CD4-positive, alpha-beta T cell (primary cell): ENCODE measurements at regions of chr20 and their contacts with region 1.

Region 1: DNA sequence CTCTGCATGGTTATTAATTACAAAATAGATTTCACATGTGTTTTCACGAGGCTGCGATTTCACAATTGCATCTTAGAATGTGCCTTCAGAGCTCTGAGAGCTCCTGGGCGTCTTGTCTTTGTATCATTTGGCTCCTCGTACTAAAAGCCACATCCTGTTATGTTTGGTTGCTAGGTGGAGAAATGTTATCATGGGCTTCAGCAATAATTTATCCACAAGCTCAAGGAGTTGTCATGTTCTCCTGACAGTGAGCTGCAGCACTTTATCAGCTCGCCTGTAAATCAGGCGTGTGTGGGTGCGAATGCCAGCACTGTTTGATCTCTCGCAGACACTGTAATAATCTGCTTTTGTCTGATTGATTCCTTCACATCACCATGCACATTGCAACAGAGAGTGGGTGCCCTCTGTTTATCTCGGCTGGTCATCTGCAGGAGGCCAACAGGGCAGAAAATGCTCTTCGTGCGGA is 218.6 kb upstream of the ZFP64 start:
- DNase-seq: peak; percentile 46 to 94 (median 62)
- ATAC-seq: peak; percentile 86
- H3K4me3 ChIP-seq: peak overlapping the region; percentile 25
- H3K4me3 Mint-ChIP-seq: peak overlapping the region; percentile 81
- H3K27ac ChIP-seq: peak overlapping the region; percentile 89 to 96
- H3K27ac Mint-ChIP-seq: peak overlapping the region; percentile 96
- H3K4me1 ChIP-seq: peaks cover 61% of the 10 kb centered on the region
- H3K4me1 Mint-ChIP-seq: peaks cover 84% of the 10 kb centered on the region
- H3K27me3 ChIP-seq: no peaks in the 10 kb centered on the region
- H3K27me3 Mint-ChIP-seq: no peaks in the 10 kb centered on the region
- CTCF ChIP-seq: no peak

Region 2: DNA sequence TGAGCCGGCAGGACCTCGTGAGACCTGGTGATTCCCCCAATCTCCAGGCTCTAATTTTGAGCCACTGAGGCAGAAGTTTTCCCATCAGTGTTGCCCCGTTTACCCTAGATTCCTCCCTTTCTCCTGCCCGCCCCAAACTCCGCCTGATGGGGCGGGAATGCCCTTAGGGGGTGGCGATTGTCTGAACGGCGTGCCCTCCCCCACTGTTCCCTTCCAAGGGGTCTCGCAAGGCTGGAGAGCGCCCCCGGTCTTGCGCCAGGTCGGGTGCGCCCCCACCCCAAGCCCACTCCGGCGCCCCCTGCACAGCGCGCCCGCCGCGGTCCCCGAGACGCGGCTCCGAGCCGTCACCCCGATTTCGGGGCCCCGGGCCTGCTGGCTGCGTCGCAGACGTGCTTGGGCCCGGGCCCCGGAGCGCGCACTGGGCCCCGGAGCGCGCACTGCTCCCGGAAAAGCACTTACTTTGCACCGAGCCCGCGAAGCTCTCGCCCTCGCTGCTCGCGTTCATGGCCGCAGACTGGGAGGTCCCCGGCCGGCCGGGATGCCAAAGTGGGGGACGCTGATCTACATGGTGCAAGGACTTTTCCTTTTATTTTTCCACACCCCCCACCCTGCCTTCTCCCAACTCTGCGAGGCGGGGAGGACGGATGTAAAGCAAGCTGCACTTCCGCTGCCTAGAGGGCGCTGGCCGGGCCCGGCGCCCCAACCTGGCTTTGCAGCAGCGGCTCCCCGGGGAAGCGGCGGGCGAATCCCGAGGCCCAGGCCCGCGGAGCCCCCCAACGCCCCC is 218.9 kb before region 1 on chr20 and contains the start of gene ZFP64:
- CTCF ChIA-PET with region 1: no interaction called
- POLR2A ChIA-PET with region 1: interaction called, 7 read pairs
- intact Hi-C with region 1: loop called in 1 of 2 experiments (anchors 5 kb)
- DNase-seq: peak; percentile 40 to 87 (median 66)
- ATAC-seq: peak; percentile 78
- H3K4me3 ChIP-seq: peak within 1 kb of the TSS; percentile 97
- H3K4me3 Mint-ChIP-seq: peak within 1 kb of the TSS; percentile 97
- H3K27ac ChIP-seq: peak within 1 kb of the TSS; percentile 74 to 80
- H3K27ac Mint-ChIP-seq: peak within 1 kb of the TSS; percentile 94
- H3K4me1 ChIP-seq: peaks cover 18% of the 10 kb centered on the region
- H3K4me1 Mint-ChIP-seq: peaks cover 18% of the 10 kb centered on the region
- H3K27me3 ChIP-seq: no peaks in the 10 kb centered on the region
- H3K27me3 Mint-ChIP-seq: no peaks in the 10 kb centered on the region
- CTCF ChIP-seq: peak; percentile 73
- total RNA-seq, gene ZFP64: 2.5 to 3.2 TPM

Region 3: DNA sequence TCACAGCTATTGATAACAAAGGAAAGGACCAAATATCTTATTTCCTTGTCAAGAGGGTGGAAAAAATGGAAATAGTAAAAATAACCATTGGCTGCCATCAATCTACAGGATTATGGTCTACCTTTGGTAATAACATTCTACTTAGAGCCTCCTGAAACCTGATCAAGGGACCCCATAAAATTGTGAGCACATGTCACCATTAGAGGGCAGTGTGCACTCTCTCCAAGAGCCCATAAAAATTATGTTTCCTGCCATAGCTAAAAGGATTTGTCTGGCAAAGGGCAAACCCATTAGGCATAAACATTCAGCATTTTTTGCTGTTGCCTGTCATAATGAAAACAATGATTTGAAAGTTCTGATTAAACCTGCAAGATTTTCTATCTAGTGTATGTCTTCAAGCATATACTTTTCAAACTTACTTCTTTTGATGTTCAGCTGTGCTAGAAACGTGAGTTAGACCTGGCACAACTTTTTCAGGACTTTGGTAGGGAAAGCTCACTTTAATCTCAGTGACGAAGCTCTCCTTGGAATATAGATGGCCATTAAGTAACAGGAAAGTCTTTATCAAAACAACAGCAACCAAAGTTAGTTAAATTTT is 98.0 kb before region 1 on chr20:
- CTCF ChIA-PET with region 1: interaction called, 5 read pairs
- POLR2A ChIA-PET with region 1: interaction called, 17 read pairs
- intact Hi-C with region 1: no loop called
- DNase-seq: peak in 13 of 14 experiments; percentile 20 to 83 (median 47)
- ATAC-seq: peak; percentile 73
- H3K4me3 ChIP-seq: no peak overlapping the region
- H3K4me3 Mint-ChIP-seq: no peak overlapping the region
- H3K27ac ChIP-seq: no peak overlapping the region
- H3K27ac Mint-ChIP-seq: no peak overlapping the region
- H3K4me1 ChIP-seq: peaks cover 4% of the 10 kb centered on the region
- H3K4me1 Mint-ChIP-seq: peaks cover 38% of the 10 kb centered on the region
- H3K27me3 ChIP-seq: no peaks in the 10 kb centered on the region
- H3K27me3 Mint-ChIP-seq: no peaks in the 10 kb centered on the region
- CTCF ChIP-seq: peak; percentile 88

Region 4: DNA sequence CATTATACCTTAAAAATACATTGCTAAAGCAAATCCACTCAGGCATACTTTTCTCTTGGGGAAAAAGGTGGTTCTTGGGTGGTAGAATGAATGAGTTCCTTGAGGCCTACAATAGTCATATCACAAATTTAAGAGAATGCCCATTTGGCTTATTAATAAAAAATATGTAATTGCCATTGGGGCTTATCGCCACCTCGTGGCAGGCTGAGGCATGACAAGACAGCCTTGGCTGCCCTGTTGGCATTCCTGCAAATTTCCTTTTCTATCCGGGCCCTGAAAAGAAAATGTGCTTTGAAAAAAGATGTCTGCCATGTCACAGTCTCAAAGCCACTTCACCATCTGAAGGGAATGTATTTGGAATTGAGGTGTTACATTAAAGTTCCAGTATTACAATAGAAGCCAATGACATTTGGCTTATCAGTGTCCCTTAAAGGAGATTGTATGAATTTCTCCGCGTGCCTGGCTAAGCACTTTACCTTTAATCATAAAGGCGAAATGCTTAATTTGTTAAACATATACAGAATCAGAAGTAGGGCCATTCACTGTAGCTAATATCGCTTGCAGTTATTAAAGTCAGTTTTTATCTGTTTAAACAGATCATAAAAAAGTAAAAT is 30.4 kb before region 1 on chr20:
- CTCF ChIA-PET with region 1: no interaction called
- POLR2A ChIA-PET with region 1: interaction called, 39 read pairs
- intact Hi-C with region 1: no loop called
- DNase-seq: peak in 12 of 14 experiments; percentile 9 to 60 (median 26)
- ATAC-seq: no peak
- H3K4me3 ChIP-seq: no peak overlapping the region
- H3K4me3 Mint-ChIP-seq: no peak overlapping the region
- H3K27ac ChIP-seq: no peak overlapping the region
- H3K27ac Mint-ChIP-seq: no peak overlapping the region
- H3K4me1 ChIP-seq: peaks cover 4% of the 10 kb centered on the region
- H3K4me1 Mint-ChIP-seq: peaks cover 26% of the 10 kb centered on the region
- H3K27me3 ChIP-seq: no peaks in the 10 kb centered on the region
- H3K27me3 Mint-ChIP-seq: no peaks in the 10 kb centered on the region
- CTCF ChIP-seq: peak; percentile 95

Region 5: DNA sequence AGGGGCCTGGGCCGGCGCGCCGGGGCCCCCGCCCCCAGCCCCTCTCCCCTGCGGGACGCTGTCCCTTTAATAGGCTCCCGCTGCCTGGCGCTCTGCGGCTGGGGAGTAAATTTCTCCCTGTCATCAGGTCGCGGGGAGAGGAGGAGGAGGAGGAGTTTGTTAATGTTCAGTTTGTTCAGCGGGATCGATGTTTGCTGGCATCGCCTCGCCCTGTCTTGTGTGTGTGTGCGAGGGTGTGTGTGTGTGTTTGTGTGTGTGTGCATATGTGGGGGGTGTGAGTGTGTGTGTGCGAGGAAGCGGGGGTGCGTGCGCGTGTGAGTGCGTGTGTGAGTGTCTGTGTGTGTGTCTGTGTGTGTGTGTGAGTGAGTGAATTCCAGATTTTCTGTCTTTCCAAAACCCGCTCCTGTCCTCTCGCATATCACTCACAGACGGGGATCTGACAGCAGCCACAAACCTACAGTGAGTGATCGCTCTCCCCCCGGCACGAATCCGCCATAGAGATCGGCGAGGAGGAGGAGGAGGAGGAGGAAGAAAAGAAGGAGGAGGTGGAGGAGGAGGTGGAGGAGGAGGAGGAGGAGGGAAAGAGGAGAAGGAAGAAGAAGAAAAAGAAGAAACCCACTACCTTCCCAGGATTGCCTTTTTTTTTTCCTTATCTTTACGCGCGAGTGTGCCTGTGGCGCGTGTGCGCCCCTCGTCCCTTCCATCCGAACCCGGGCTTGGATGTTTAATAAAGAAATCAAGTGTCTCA is 562.1 kb after region 1 on chr20 and contains the start of gene TSHZ2:
- CTCF ChIA-PET with region 1: no interaction called
- POLR2A ChIA-PET with region 1: interaction called, 7 read pairs
- intact Hi-C with region 1: loop called in 1 of 2 experiments (anchors 1 kb)
- DNase-seq: peak; percentile 39 to 76 (median 56)
- ATAC-seq: peak; percentile 50
- H3K4me3 ChIP-seq: peak within 1 kb of the TSS; percentile 77
- H3K4me3 Mint-ChIP-seq: peak within 1 kb of the TSS; percentile 95
- H3K27ac ChIP-seq: peak within 1 kb of the TSS; percentile 81 to 85
- H3K27ac Mint-ChIP-seq: peak within 1 kb of the TSS; percentile 89
- H3K4me1 ChIP-seq: peaks cover 5% of the 10 kb centered on the region
- H3K4me1 Mint-ChIP-seq: peaks cover 48% of the 10 kb centered on the region
- H3K27me3 ChIP-seq: peaks cover 0 to 8% of the 10 kb centered on the region in 2 experiments
- H3K27me3 Mint-ChIP-seq: peaks cover 6% of the 10 kb centered on the region
- CTCF ChIP-seq: no peak
- total RNA-seq, gene TSHZ2: 26.1 to 27.4 TPM

Region 6: GRCh38 chr20:53001498-53002301 is 591.5 kb after region 1 on chr20:
- CTCF ChIA-PET with region 1: no interaction called
- POLR2A ChIA-PET with region 1: interaction called, 15 read pairs
- intact Hi-C with region 1: no loop called
- DNase-seq: peak in 8 of 14 experiments; percentile 2 to 66 (median 22)
- ATAC-seq: peak; percentile 76
- H3K4me3 ChIP-seq: peak overlapping the region; percentile 44
- H3K4me3 Mint-ChIP-seq: peak overlapping the region; percentile 84
- H3K27ac ChIP-seq: peak overlapping the region; percentile 68 to 79
- H3K27ac Mint-ChIP-seq: peak overlapping the region; percentile 89
- H3K4me1 ChIP-seq: peaks cover 25% of the 10 kb centered on the region
- H3K4me1 Mint-ChIP-seq: peaks cover 72% of the 10 kb centered on the region
- H3K27me3 ChIP-seq: no peaks in the 10 kb centered on the region
- H3K27me3 Mint-ChIP-seq: no peaks in the 10 kb centered on the region
- CTCF ChIP-seq: no peak